OCI-LY7 (cell line): ENCODE measurements at regions of chr2 and their contacts with region 1.

Region 1: DNA sequence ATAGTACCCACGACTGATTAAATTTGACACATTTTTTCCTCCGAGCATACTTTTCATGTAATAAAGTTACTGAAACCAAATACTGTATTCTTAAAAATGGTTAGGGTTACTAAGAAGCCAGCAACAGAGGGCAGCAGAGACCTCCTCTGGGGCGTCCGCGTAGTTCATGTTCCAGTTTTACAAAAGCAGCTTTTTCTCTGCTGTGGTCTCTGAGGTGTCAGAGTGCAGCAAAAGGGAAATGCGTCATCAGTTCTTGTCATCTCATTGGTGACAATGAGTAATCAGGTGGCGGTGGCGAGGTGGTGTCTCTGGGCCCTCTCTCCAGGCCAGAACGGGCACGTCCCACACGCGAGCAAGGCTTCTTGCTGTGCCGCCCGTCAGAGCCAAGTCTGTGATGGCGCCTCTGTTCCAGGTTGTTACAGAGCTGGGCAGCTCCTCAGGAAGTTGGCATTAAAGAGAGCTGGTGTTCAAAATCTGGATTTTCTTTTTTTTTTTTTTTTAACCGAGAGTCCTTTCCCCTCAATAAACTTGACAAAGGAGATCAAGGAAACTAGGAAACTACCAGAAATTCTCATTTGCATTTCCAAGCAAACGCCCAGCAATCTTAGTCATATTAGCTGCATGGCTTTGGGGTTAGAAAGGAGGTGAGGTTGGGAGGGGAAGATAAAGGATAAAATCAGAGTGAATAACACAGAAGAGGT is 98.6 kb upstream of the BZW1 start:
- DNase-seq: peak; percentile 98
- H3K4me3 ChIP-seq: peak overlapping the region; percentile 50
- H3K27ac ChIP-seq: peak overlapping the region; percentile 43
- H3K4me1 ChIP-seq: peaks cover 15% of the 10 kb centered on the region
- CTCF ChIP-seq: peak; percentile 97

Region 2: DNA sequence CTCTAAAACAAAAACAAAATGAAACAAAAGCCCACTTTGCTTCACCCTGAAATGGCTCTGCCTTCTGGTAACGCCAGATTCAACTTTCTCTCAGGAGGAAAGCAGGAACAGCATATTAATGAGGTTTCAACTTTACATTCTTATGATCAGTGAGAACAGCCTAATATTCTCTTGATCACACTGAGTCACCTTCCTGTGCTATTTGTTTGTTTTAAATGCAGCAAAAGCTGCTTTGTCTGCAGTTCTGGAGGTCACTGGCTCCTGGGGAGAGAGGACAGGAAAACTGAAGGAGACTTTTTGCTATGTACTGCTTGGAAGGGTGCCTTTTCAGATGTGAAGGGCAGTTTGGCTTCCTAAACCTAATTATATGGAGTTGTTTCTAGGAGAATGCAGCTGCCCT is 709.7 kb before region 1 on chr2:
- CTCF ChIA-PET with region 1: no interaction called
- POLR2A ChIA-PET with region 1: no interaction called
- intact Hi-C with region 1: no loop called
- DNase-seq: no peak
- H3K4me3 ChIP-seq: no peak overlapping the region
- H3K27ac ChIP-seq: no peak overlapping the region
- H3K4me1 ChIP-seq: no peaks in the 10 kb centered on the region
- CTCF ChIP-seq: no peak

Region 3: GRCh38 chr2:200864176-200864976 is 151.2 kb after region 1 on chr2 and contains the start of gene CLK1:
- CTCF ChIA-PET with region 1: no interaction called
- POLR2A ChIA-PET with region 1: no interaction called
- intact Hi-C with region 1: loop called (anchors 2 kb)
- DNase-seq: peak; percentile 94
- H3K4me3 ChIP-seq: peak within 1 kb of the TSS; percentile 82
- H3K27ac ChIP-seq: peak within 1 kb of the TSS; percentile 89
- H3K4me1 ChIP-seq: peaks cover 30% of the 10 kb centered on the region
- CTCF ChIP-seq: no peak
- total RNA-seq, gene CLK1: 74.9 and 80.1 TPM in 2 replicates

Region 4: DNA sequence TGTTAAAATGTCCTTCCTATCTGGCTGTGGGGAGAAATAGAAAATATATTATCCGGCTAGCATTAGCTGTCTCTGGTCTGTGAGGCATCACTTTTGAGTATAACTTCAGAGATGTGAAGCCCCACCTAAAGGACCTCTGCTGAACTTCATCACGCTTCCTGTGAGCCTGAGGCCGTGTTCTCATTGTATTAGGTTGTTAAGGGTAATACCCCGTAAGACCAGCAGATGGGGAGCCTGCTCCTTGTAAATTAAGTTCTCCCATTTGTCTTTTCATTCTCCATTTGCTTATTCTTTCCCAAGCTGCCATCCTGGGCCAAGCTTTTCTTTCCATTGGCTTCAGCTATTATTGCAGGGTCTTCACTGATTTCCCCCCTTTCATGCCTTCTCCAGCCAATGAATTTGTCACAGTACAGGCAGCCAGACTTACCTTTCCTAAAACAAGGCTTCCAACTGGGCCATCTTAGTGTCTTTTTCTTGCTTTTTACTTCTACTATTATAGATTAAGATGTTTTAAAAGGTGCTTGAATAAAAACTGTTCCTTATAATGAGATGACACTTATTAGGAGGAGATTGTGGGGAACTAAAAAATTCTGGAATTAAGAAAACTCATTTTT is 188.4 kb after region 1 on chr2:
- CTCF ChIA-PET with region 1: no interaction called
- POLR2A ChIA-PET with region 1: no interaction called
- intact Hi-C with region 1: loop called (anchors 2 kb)
- DNase-seq: peak; percentile 92
- H3K4me3 ChIP-seq: no peak overlapping the region
- H3K27ac ChIP-seq: no peak overlapping the region
- H3K4me1 ChIP-seq: peaks cover 5% of the 10 kb centered on the region
- CTCF ChIP-seq: peak; percentile 95

Region 5: GRCh38 chr2:201118121-201118960 is 405.2 kb after region 1 on chr2:
- CTCF ChIA-PET with region 1: interaction called, 3 read pairs
- POLR2A ChIA-PET with region 1: no interaction called
- intact Hi-C with region 1: loop called (anchors 5 kb)
- DNase-seq: peak; percentile 91
- H3K4me3 ChIP-seq: peak overlapping the region; percentile 81
- H3K27ac ChIP-seq: peak overlapping the region; percentile 95
- H3K4me1 ChIP-seq: peaks cover 43% of the 10 kb centered on the region
- CTCF ChIP-seq: peak; percentile 85